ENCODE measurements at regions of chr12 and their contacts with region 1.

Region 1: GRCh38 chr12:48988030-48988649 is 10.0 kb downstream of the WNT1 start:
- DNase-seq: peak; percentile 89
- ATAC-seq: peak; percentile 85
- H3K4me3 Mint-ChIP-seq: no peak overlapping the region
- H3K27ac Mint-ChIP-seq: no peak overlapping the region
- H3K4me1 Mint-ChIP-seq: no peaks in the 10 kb centered on the region
- H3K27me3 Mint-ChIP-seq: peaks cover 41% of the 10 kb centered on the region

Region 2: DNA sequence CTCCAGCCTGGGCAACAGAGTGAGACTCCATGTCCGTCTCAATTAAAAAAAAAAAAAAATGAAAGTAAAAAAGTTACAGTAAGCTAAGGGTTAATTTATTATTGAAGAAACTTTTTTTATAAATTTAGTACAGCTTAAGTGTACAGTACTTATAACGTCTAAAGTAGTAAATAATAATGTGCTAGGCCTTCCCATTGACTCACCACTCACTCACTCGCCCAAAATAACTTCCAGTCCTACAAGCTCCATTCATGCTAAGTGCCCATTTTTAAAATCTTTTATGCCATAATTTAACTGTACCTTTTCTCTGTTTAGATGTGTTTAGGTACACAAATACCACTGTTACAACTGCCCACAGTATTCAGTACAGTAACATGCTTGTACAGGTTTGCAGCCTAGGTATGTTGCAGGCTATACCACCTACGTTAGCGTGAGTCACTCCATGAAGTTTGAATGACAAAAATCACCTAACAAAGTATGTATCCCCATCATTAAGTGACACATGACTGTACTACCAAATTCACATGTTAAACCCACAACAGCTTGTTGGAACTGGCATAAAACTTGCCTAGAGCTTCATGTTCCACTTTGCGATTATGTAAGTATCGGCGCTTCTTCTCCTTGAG is 316.8 kb before region 1 on chr12:
- CTCF ChIA-PET with region 1: no interaction called
- POLR2A ChIA-PET with region 1: no interaction called
- intact Hi-C with region 1: no loop called
- DNase-seq: no peak
- ATAC-seq: no peak
- H3K4me3 Mint-ChIP-seq: no peak overlapping the region
- H3K27ac Mint-ChIP-seq: no peak overlapping the region
- H3K4me1 Mint-ChIP-seq: peaks cover 11% of the 10 kb centered on the region
- H3K27me3 Mint-ChIP-seq: no peaks in the 10 kb centered on the region

Region 3: GRCh38 chr12:48903982-48904411 is 84.1 kb before region 1 on chr12:
- CTCF ChIA-PET with region 1: interaction called, 14 read pairs
- POLR2A ChIA-PET with region 1: no interaction called
- intact Hi-C with region 1: no loop called
- DNase-seq: peak; percentile 92
- ATAC-seq: peak; percentile 94
- H3K4me3 Mint-ChIP-seq: peak overlapping the region; percentile 63
- H3K27ac Mint-ChIP-seq: no peak overlapping the region
- H3K4me1 Mint-ChIP-seq: peaks cover 5% of the 10 kb centered on the region
- H3K27me3 Mint-ChIP-seq: peaks cover 3% of the 10 kb centered on the region

Region 4: DNA sequence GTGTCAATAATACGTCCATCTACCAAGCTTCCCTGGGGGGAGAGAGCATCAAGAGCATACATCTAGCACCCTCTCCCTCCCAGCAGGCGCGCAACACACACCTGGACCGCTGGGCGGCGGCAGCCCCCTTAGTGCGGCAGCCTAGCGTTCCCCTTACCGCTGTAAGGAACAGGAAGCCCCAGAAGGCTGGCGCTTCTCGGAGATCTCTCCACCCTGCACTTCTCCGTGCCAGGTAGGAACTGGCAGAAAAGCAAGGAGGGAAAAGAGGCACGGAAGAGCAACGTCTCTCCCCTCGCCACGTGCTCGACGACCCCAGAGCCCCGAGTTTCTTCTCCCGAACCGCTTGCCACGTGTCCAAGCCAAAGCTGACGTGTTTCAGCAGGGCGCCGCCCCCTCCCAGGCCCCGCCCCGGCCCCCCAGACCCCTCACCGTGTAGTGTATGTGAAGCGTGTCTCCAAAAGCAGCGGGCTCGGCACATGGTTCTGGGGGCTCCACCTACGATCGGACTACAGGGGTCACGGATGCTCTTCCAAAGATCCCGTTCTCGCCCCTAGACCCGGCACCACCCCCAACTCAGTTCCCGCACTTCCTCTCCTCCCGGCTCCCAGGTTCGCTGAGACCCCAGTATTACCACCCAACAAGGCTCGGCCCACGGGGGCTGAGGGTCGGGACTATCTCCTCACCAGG is 63.4 kb before region 1 on chr12:
- CTCF ChIA-PET with region 1: interaction called, 25 read pairs
- POLR2A ChIA-PET with region 1: no interaction called
- intact Hi-C with region 1: loop called in 1 of 2 experiments (anchors 2 kb)
- DNase-seq: peak; percentile 85
- ATAC-seq: peak; percentile 75
- H3K4me3 Mint-ChIP-seq: peak overlapping the region; percentile 83
- H3K27ac Mint-ChIP-seq: peak overlapping the region; percentile 93
- H3K4me1 Mint-ChIP-seq: peaks cover 52% of the 10 kb centered on the region
- H3K27me3 Mint-ChIP-seq: no peaks in the 10 kb centered on the region

Region 5: GRCh38 chr12:48936379-48936979 is 51.7 kb before region 1 on chr12:
- CTCF ChIA-PET with region 1: interaction called, 13 read pairs
- POLR2A ChIA-PET with region 1: interaction called, 5 read pairs
- intact Hi-C with region 1: loop called in 1 of 2 experiments (anchors 2 kb)
- DNase-seq: peak; percentile 89
- ATAC-seq: peak; percentile 82
- H3K4me3 Mint-ChIP-seq: no peak overlapping the region
- H3K27ac Mint-ChIP-seq: no peak overlapping the region
- H3K4me1 Mint-ChIP-seq: peaks cover 23% of the 10 kb centered on the region
- H3K27me3 Mint-ChIP-seq: no peaks in the 10 kb centered on the region

Region 6: GRCh38 chr12:48943221-48943620 is 44.9 kb before region 1 on chr12:
- CTCF ChIA-PET with region 1: interaction called, 13 read pairs
- POLR2A ChIA-PET with region 1: no interaction called
- intact Hi-C with region 1: no loop called
- DNase-seq: no peak
- ATAC-seq: no peak
- H3K4me3 Mint-ChIP-seq: no peak overlapping the region
- H3K27ac Mint-ChIP-seq: no peak overlapping the region
- H3K4me1 Mint-ChIP-seq: no peaks in the 10 kb centered on the region
- H3K27me3 Mint-ChIP-seq: no peaks in the 10 kb centered on the region

Region 7: GRCh38 chr12:48969833-48970701 is 18.1 kb before region 1 on chr12:
- CTCF ChIA-PET with region 1: interaction called, 23 read pairs
- POLR2A ChIA-PET with region 1: no interaction called
- intact Hi-C with region 1: loop called in 1 of 2 experiments (anchors 2 kb)
- DNase-seq: peak; percentile 58
- ATAC-seq: peak; percentile 25
- H3K4me3 Mint-ChIP-seq: no peak overlapping the region
- H3K27ac Mint-ChIP-seq: no peak overlapping the region
- H3K4me1 Mint-ChIP-seq: peaks cover 40% of the 10 kb centered on the region
- H3K27me3 Mint-ChIP-seq: peaks cover 44% of the 10 kb centered on the region